ENCODE measurements at regions of chr4 and their contacts with region 1.

Region 1: DNA sequence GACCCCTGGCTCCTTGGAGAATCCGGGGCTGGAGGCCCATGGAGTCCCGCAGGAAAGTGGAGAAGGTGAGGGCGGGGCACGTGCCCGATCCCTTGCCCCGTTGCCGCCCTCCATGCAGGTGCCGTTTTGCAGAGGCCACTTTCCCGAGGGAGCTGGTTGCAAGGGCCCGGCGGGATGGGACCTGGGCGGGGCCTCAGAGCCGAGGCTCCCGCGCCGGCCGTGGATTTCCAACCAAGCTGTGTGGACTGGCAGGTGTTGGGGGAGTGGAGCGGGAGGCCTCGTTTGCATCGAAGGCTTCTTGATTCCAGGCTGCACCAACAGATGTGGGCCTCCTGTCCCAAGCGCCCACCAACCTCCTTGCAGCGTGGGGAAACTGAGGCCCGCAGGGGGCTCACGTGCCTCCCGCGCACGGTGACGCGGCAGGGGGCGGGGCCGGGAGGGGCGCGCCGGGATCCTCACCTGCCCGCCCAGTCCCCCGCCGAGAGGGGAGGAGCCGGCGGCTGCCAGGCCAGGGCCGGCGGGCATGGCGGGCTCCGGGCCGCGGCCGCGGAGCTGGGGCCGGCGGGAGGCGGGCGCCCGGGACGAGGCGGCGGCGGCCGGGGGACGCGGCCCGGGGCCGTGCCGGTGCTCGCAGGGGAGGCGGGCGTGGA is 24.9 kb downstream of the SH3BP2 start:
- DNase-seq: peak in 2 of 10 donors; percentile 35 to 38
- ATAC-seq: peak; percentile 45 to 63
- H3K4me3 Mint-ChIP-seq: peak overlapping the region; percentile 76 to 93 (median 88)
- H3K27ac Mint-ChIP-seq: peak overlapping the region in 6 of 10 donors; percentile 52 to 99 (median 90)
- H3K4me1 Mint-ChIP-seq: peaks cover 41 to 68% (median 65%) of the 10 kb centered on the region in 4 donors
- H3K27me3 Mint-ChIP-seq: no peaks in the 10 kb centered on the region

Region 2: GRCh38 chr4:2837904-2838496 is 20.2 kb after region 1 on chr4:
- POLR2A ChIA-PET with region 1: interaction called, 62 read pairs
- DNase-seq: peak; percentile 44 to 88 (median 74)
- ATAC-seq: peak; percentile 96 to 98
- H3K4me3 Mint-ChIP-seq: peak overlapping the region; percentile 70 to 95 (median 87)
- H3K27ac Mint-ChIP-seq: peak overlapping the region; percentile 86 to 99 (median 92)
- H3K4me1 Mint-ChIP-seq: peaks cover 29 to 83% (median 68%) of the 10 kb centered on the region in 4 donors
- H3K27me3 Mint-ChIP-seq: no peaks in the 10 kb centered on the region

Region 3: GRCh38 chr4:2843263-2843940 is 25.6 kb after region 1 on chr4 and contains the start of gene ADD1:
- POLR2A ChIA-PET with region 1: interaction called, 62 read pairs
- DNase-seq: peak; percentile 89 to 100 (median 94)
- ATAC-seq: peak; percentile 85 to 94
- H3K4me3 Mint-ChIP-seq: peak within 1 kb of the TSS; percentile 90 to 97 (median 92)
- H3K27ac Mint-ChIP-seq: peak within 1 kb of the TSS; percentile 87 to 96 (median 93)
- H3K4me1 Mint-ChIP-seq: peaks cover 23 to 74% (median 69%) of the 10 kb centered on the region in 4 donors
- H3K27me3 Mint-ChIP-seq: no peaks in the 10 kb centered on the region
- polyA plus RNA-seq, gene ADD1: 129 to 151 (median 150) TPM